HCT116 (cell line): ENCODE measurements at regions of chr20 and their contacts with region 1.

Region 1: GRCh38 chr20:52833901-52834300 is 138.3 kb upstream of the TSHZ2 start:
- DNase-seq: no peak
- ATAC-seq: no peak
- H3K4me3 ChIP-seq: no peak overlapping the region
- H3K27ac ChIP-seq: no peak overlapping the region
- H3K4me1 ChIP-seq: no peaks in the 10 kb centered on the region
- H3K27me3 ChIP-seq: no peaks in the 10 kb centered on the region
- CTCF ChIP-seq: no peak
- POLR2A ChIP-seq: no peak
- RAD21 ChIP-seq: no peak

Region 2: GRCh38 chr20:52880997-52881396 is 47.1 kb after region 1 on chr20:
- CTCF ChIA-PET with region 1: no interaction called
- POLR2A ChIA-PET with region 1: no interaction called
- RAD21 ChIA-PET with region 1: no interaction called
- intact Hi-C with region 1: loop called (anchors 2 kb)
- DNase-seq: no peak
- ATAC-seq: no peak
- H3K4me3 ChIP-seq: no peak overlapping the region
- H3K27ac ChIP-seq: no peak overlapping the region
- H3K4me1 ChIP-seq: no peaks in the 10 kb centered on the region
- H3K27me3 ChIP-seq: no peaks in the 10 kb centered on the region
- CTCF ChIP-seq: no peak
- POLR2A ChIP-seq: no peak
- RAD21 ChIP-seq: no peak